ENCODE measurements at regions of chr4 and their contacts with region 1.

Region 1: GRCh38 chr4:153344131-153345010 is at the start of gene MND1:
- DNase-seq: peak; percentile 91
- H3K4me3 Mint-ChIP-seq: peak within 1 kb of the TSS; percentile 93
- H3K27ac Mint-ChIP-seq: peak within 1 kb of the TSS; percentile 87
- H3K4me1 Mint-ChIP-seq: peaks cover 40% of the 10 kb centered on the region
- H3K27me3 Mint-ChIP-seq: peaks cover 17% of the 10 kb centered on the region
- total RNA-seq, gene MND1: 15.4 and 17.8 TPM in 2 replicates

Region 2: GRCh38 chr4:153362184-153362583 is 17.8 kb after region 1 on chr4:
- intact Hi-C with region 1: loop called (anchors 1 kb)
- DNase-seq: no peak
- H3K4me3 Mint-ChIP-seq: no peak overlapping the region
- H3K27ac Mint-ChIP-seq: no peak overlapping the region
- H3K4me1 Mint-ChIP-seq: peaks cover 17% of the 10 kb centered on the region
- H3K27me3 Mint-ChIP-seq: no peaks in the 10 kb centered on the region

Region 3: GRCh38 chr4:153466081-153466948 is 121.9 kb after region 1 on chr4 and contains the start of gene TMEM131L:
- intact Hi-C with region 1: loop called (anchors 2 kb)
- DNase-seq: peak; percentile 66
- H3K4me3 Mint-ChIP-seq: peak within 1 kb of the TSS; percentile 82
- H3K27ac Mint-ChIP-seq: peak within 1 kb of the TSS; percentile 82
- H3K4me1 Mint-ChIP-seq: peaks cover 53% of the 10 kb centered on the region
- H3K27me3 Mint-ChIP-seq: no peaks in the 10 kb centered on the region
- total RNA-seq, gene TMEM131L: 28.1 and 29.7 TPM in 2 replicates

Region 4: DNA sequence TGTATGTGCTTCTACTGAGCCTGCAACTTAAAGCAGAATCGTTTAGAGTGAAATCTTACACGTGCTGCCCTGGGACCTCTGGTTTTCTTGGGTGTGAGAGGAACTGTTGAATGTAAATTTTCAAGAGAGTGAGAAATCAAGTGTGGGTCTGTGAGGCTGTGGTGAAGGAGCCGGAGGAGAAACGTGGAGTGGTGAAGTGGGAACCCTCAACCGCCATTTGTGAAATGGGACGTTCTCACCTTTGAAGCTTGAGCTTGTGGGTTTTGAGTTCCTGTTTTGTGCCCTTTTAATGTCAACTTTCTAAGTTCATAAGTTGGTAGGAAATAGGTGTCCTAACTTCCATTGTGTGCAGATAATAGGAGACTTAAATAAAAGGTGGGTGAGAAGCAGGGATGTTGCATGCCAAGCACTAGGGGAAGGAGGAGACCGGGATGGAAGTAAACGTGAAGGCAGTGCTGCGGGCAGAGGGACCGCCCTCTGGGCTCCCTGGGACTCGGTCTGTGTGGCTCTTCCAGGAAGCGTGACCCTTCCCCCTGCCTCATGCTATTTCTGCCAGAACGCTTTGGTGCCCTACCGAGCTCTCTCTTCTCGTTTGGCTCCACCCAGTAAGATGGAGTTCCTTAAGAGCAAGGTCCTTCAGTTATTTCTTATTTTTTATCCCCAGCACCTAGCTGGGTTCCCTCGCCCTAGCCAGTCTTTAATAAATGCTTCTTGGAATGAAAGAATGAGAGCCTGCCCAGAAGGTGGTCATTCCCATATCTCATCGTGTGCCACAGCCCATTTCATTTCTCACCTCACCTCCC is 177.8 kb after region 1 on chr4:
- intact Hi-C with region 1: loop called (anchors 1 kb)
- DNase-seq: peak; percentile 60
- H3K4me3 Mint-ChIP-seq: peak overlapping the region; percentile 71
- H3K27ac Mint-ChIP-seq: peak overlapping the region; percentile 98
- H3K4me1 Mint-ChIP-seq: peaks cover 87% of the 10 kb centered on the region
- H3K27me3 Mint-ChIP-seq: no peaks in the 10 kb centered on the region

Region 5: DNA sequence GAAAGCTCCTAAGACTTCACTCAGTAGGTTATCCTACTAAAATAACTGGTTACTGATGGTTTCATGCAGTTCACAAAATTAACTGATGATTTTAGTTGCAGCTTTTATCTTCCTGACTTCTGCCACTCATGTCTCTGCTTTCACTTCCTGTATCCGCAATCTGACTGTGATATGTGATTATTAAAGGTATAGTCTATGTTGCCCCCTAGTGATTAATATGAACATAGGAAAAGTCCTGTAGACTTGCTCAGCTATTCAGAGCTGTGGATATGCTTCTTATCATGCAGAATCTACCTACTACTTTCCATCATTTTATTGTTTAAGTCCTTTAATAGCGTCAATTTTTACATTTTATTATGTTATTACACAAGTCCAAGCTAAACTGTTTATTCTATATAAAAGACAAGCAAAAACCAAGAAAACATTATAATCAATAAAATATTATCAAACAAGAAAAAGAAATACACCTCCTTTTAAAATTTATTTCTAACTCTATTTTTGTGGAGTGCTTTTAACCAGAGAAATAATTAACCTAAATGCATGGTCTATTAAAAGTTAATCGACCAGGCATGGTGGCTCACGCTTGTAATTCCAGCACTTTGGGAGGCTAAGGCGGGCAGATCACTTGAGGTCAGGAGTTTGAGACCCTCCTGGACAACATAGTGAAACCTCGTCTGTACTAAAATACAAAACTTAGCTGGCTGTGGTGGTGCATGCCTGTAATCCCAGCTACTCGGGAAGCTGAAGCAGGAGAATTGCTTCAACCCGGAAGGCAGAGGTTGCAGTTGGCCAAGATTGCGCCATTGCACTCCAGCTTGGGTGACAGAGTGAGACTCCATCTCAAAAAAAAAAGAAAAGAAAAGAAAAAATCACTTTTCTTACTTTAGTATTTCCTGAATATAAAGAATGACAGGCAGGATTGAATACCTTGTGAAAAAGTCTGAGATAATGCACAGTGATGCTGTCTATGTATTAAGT is 299.3 kb after region 1 on chr4:
- intact Hi-C with region 1: loop called (anchors 2 kb)
- DNase-seq: no peak
- H3K4me3 Mint-ChIP-seq: no peak overlapping the region
- H3K27ac Mint-ChIP-seq: no peak overlapping the region
- H3K4me1 Mint-ChIP-seq: peaks cover 20% of the 10 kb centered on the region
- H3K27me3 Mint-ChIP-seq: no peaks in the 10 kb centered on the region

Region 6: GRCh38 chr4:153750197-153750817 is 405.9 kb after region 1 on chr4:
- intact Hi-C with region 1: loop called (anchors 5 kb)
- DNase-seq: peak; percentile 51
- H3K4me3 Mint-ChIP-seq: no peak overlapping the region
- H3K27ac Mint-ChIP-seq: no peak overlapping the region
- H3K4me1 Mint-ChIP-seq: peaks cover 3% of the 10 kb centered on the region
- H3K27me3 Mint-ChIP-seq: peaks cover 43% of the 10 kb centered on the region